ENCODE measurements at regions of chr22 and their contacts with region 1.

Region 1: DNA sequence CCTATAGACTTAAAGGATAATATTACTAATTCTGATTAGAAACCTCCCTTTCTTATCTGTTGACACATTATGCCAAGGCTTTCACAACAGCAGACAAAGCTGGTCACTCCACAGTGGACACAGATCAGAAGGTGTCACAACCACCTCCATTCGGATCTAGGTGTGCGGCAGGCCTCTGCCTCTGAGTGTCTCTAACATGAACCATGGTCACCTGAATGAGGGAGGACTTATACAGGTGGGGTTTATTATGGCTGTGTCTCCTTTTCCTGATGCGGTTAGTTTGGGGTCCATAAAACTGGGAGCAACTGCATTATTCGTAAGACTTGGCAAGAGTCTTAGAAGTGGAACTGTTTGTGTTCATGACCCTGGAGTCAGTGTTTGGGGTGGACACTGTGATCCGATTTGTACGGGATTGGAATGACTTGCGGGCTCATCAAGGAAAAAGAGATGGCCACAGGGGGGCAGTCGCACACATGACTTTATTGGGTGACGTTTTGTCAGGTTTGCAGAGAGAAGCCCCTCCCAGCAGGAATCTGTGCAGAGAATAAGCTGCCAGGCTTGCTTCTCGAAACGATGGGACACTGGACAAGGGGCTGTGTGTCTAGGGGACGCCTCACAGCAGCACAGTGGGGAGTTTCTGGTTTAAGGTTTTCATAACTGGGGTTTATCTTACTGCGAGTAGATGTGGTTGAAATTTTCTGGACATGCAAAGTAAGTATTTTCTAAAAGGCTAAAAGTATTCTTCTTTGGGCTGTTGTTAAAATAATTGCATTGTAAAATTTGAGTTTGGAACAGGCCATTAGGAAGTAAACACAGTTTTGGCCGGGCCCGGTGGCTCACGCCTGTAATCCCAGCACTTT is 90.6 kb downstream of the GAB4 start:
- DNase-seq: peak; percentile 54 to 62
- ATAC-seq: peak in 2 of 3 donors; percentile 66
- H3K4me3 ChIP-seq: no peak overlapping the region
- H3K4me3 Mint-ChIP-seq: no peak overlapping the region
- H3K27ac ChIP-seq: no peak overlapping the region
- H3K27ac Mint-ChIP-seq: no peak overlapping the region
- H3K4me1 ChIP-seq: no peaks in the 10 kb centered on the region
- H3K4me1 Mint-ChIP-seq: peaks cover 6 to 7% of the 10 kb centered on the region in 2 donors
- H3K27me3 ChIP-seq: peaks cover 2% of the 10 kb centered on the region
- H3K27me3 Mint-ChIP-seq: peaks cover 6 to 22% of the 10 kb centered on the region in 2 donors
- CTCF ChIP-seq: peak; percentile 79

Region 2: GRCh38 chr22:16989915-16990314 is 72.5 kb after region 1 on chr22:
- intact Hi-C with region 1: loop called (anchors 10 kb)
- DNase-seq: no peak
- ATAC-seq: no peak
- H3K4me3 ChIP-seq: no peak overlapping the region
- H3K4me3 Mint-ChIP-seq: no peak overlapping the region
- H3K27ac ChIP-seq: no peak overlapping the region
- H3K27ac Mint-ChIP-seq: no peak overlapping the region
- H3K4me1 ChIP-seq: no peaks in the 10 kb centered on the region
- H3K4me1 Mint-ChIP-seq: peaks cover 0 to 5% of the 10 kb centered on the region in 2 donors
- H3K27me3 ChIP-seq: no peaks in the 10 kb centered on the region
- H3K27me3 Mint-ChIP-seq: peaks cover 6 to 15% of the 10 kb centered on the region in 2 donors
- CTCF ChIP-seq: no peak

Region 3: DNA sequence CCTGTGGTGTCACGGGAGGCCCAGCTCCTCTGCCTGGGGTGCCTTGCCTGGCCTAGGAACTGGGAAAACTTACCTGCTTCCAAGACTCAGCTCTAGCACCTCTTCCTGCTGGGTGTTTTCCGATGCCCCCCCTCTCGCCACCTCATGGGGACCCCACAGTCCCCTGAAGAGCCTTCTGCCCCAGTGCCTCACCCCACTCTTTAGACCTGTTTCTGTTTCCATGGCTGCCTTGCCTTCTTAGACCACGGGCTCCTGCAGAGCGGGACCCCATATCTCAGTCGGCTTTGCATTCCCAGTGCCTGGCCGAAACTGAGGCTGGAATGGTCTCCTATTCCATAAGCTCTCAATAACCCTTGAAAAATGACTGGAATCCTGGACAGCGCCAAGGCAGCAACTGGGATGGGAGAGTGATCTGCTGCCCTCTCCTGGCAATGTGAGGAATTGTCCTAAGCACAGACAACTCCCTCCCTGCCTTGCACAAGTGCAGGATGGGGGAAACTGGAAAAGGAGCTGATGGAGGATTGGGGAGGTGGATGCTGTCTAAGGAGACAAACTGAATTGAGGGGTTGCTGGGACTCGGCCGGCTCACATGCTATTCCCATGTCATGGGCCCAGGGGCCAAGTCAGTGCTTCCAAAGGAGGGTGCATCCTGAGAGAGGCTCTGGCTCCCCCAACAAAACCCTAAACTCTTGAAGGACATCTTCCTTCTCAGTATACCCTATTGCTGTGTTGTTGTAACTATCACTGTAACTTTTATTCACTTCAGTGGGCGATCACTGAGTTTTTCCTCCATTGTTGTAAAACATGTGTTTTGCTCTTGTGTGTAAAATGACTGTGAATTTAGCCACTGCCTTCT is 140.8 kb after region 1 on chr22:
- intact Hi-C with region 1: loop called (anchors 1 kb)
- DNase-seq: peak; percentile 44 to 72
- ATAC-seq: peak in 2 of 3 donors; percentile 65 to 79
- H3K4me3 ChIP-seq: no peak overlapping the region
- H3K4me3 Mint-ChIP-seq: no peak overlapping the region
- H3K27ac ChIP-seq: no peak overlapping the region
- H3K27ac Mint-ChIP-seq: no peak overlapping the region
- H3K4me1 ChIP-seq: peaks cover 4% of the 10 kb centered on the region
- H3K4me1 Mint-ChIP-seq: peaks cover 4 to 7% of the 10 kb centered on the region in 2 donors
- H3K27me3 ChIP-seq: no peaks in the 10 kb centered on the region
- H3K27me3 Mint-ChIP-seq: peaks cover 6 to 26% of the 10 kb centered on the region in 2 donors
- CTCF ChIP-seq: peak; percentile 96